ENCODE measurements at regions of chr3 and their contacts with region 1.

Region 1: GRCh38 chr3:187230011-187230410 is 32.7 kb downstream of the RTP1 start:
- DNase-seq: no peak
- ATAC-seq: no peak
- H3K4me3 ChIP-seq: no peak overlapping the region
- H3K27ac ChIP-seq: no peak overlapping the region
- H3K4me1 ChIP-seq: no peaks in the 10 kb centered on the region
- H3K27me3 ChIP-seq: no peaks in the 10 kb centered on the region

Region 2: DNA sequence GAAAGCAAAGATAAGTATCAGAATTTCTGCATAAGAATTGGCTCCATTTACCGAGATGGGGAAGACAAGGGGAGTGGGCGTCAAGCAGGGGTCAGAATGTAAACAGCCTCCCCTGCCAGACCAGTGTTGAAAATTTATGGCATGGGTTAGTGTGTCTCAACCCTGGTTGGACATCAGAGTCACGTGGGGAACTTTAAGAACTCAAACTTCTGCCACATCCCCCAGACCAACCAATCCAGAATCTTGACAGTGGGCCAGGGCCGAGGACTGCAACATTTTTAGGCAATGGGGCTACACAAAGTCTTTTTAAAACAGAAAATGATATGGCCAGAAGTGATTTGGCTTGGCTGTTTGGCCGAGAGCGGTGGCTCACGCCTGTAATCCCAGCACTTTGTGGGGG is 75.9 kb after region 1 on chr3:
- intact Hi-C with region 1: loop called in 1 of 4 experiments (anchors 5 kb)
- DNase-seq: peak in 1 of 3 donors; percentile 42
- ATAC-seq: no peak
- H3K4me3 ChIP-seq: no peak overlapping the region
- H3K27ac ChIP-seq: no peak overlapping the region
- H3K4me1 ChIP-seq: no peaks in the 10 kb centered on the region
- H3K27me3 ChIP-seq: no peaks in the 10 kb centered on the region

Region 3: DNA sequence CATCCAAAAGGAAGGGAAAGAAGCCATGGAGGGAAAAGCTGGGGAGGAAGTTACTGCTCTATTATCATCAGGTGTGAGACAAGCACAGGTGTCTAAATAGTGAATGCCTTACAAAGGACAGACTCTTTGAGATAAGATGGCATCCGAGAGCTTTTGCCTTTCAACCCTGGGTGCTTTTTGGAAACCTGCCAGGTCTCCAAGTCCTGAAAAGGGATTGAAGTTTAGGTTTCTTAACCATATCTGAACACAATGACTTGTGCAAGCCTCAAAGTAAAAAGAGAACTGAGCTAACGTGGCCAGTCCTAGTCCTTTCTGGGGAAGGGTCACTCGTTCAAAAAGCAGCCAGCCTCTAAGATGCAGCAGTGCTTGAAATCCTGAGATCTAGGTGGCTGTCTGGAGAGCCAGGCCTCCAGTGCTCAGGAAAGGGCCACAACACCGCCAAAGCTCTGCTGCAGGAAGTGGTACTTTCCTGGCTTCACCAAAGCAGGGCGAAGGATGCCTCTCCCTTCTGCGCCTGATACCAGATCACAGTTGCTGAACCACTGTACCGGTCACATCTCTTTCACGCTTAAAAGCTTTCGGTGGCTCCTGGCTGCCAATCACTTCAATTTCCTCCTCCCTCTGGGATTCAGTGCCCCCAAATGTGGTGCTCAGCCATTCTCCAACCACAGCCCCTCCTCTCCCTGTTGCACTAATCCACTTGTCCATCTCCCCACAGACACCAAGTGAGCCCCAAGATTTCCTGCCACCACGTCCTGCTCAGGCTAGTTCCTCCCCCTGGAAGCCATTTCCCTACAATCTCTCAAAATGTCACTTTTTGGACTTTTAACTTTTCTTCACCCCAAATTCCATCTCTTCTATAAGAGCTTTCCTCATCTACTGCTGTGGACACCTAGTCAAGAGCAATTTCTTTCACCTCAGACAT is 819.9 kb after region 1 on chr3:
- intact Hi-C with region 1: no loop called
- DNase-seq: no peak
- ATAC-seq: no peak
- H3K4me3 ChIP-seq: no peak overlapping the region
- H3K27ac ChIP-seq: no peak overlapping the region
- H3K4me1 ChIP-seq: peaks cover 3% of the 10 kb centered on the region
- H3K27me3 ChIP-seq: no peaks in the 10 kb centered on the region